ENCODE measurements at regions of chr20 and their contacts with region 1.

Region 1: GRCh38 chr20:18466894-18467730 is at the starts of genes DZANK1 and POLR3F:
- DNase-seq: peak; percentile 98

Region 2: DNA sequence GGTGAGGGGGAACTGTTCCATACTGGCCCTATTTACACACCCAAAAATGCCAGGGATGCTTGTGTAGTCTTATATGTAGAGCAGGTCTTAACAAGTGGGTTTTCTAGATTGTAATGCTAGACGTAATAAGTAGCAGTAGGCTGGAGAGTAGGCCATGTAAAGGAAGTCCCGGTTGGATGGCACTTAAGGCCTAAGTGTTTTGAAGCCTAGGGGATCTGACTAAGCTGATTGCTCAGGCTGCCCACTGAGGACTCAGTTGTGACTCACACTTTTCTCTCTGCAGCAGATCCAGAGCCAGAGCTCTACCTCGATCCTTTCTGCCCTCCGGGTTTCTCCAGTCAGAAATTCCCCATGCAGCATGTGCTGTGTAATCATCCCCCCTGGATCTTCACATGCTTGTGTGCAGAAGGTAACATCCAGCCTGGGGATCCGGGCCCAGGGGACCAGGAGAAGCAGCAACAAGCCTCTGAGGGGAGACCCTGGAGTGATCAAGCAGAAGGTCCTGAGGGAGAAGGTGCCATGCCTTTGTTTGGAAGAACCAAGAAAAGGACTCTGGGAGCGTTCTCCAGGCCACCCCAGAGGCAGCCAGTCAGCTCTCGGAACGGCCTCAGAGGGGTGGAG is 152.2 kb before region 1 on chr20:
- CTCF ChIA-PET with region 1: no interaction called
- POLR2A ChIA-PET with region 1: no interaction called
- DNase-seq: no peak

Region 3: GRCh38 chr20:18443835-18444234 is 23.3 kb before region 1 on chr20:
- CTCF ChIA-PET with region 1: no interaction called
- POLR2A ChIA-PET with region 1: no interaction called
- DNase-seq: no peak

Region 4: GRCh38 chr20:18496740-18497592 is 29.9 kb after region 1 on chr20 and contains the start of gene RBBP9:
- CTCF ChIA-PET with region 1: no interaction called
- POLR2A ChIA-PET with region 1: interaction called, 24 read pairs
- DNase-seq: peak; percentile 86

Region 5: DNA sequence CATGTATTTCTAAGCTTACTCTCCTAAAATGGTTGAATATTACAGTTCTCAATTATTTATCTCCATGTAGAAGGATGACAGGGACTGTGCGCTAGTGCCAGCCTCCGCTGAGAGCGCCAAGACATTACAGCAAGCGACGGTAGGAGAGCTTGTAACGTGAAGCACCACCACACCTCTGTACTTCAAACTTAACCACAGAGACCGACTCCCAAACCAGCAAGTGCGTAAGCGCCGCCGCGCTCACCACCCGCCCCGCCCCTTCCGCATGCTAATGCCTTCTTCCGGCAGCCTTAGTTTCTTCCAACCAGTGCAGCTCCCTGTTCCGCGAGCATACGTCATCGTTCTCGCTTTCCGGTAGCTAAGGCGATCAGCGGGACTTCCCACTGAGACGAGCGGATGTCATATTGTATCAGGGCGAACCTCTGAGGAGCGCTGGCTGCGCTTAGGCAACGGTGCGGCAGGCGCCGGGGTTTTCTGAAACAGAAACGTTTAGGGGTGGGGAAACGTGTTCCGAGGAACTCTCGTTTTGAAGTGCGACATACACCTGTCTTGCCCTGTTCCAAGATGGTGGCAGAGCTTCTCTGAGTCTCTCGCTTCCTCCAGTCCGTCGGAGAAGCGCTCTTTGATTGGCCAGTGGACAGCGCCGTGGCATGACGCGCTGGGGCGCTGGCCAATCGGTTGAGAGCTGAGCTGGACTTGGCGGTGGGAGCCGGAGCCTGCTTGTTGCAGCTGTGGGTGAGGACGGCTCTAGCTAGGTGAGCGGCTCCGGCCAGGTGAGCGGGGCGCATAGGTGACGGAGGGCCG is 40.3 kb after region 1 on chr20 and contains the start of gene SEC23B:
- CTCF ChIA-PET with region 1: no interaction called
- POLR2A ChIA-PET with region 1: interaction called, 27 read pairs
- DNase-seq: peak; percentile 92

Region 6: DNA sequence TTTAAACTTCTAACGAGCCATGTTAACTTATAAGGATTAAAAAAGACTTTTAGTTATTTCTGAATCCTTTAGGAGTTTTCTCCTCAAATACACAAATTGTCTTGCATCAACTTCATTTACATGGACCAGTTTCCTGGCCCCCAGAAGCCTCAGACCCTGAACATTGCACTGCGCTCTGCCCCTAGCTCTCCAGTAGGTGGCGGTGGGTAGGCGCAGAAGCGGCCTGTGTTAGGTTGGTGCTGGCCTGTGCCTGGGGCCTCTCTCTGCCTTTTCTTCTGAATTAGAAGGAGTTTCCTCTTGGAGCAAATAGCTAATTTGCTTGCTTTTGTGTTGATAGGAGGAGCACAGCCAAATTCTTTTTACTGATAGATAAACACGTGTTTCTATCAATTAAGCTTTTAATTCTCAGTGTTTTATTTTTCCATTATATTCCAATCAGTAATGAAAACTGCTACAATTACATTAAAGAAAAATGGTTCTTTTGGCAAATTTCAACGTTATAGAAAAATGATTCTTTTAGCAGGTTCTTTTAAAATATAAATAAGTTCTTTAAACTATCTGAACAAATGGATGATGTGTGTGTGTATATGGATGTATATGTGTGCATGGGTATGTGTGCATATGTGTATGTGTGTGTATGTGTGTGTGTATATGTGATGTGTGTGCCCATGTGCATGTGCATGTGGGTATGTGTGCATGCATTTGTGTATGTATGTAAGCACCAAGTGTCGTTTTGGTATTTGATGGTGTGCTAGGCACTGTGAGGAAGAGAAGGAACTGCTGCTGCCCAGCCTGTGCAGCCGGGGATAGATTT is 165.3 kb after region 1 on chr20:
- CTCF ChIA-PET with region 1: no interaction called
- POLR2A ChIA-PET with region 1: no interaction called
- DNase-seq: peak; percentile 73

Measured in HEK293T (cell line).